Activated CD8-positive, alpha-beta T cell treated with anti-CD3 and anti-CD28 coated beads, Interleukin-2, amount 10 ng/mL, durations not matched to agents 7 days and 5 days (primary cell): ENCODE measurements at regions of chr1 and their contacts with region 1.

Region 1: GRCh38 chr1:221777431-221778072 is 35.7 kb upstream of the DUSP10 start:
- DNase-seq: peak; percentile 77
- ATAC-seq: peak; percentile 68
- H3K4me3 Mint-ChIP-seq: peak overlapping the region; percentile 61
- H3K27ac Mint-ChIP-seq: peak overlapping the region; percentile 93
- H3K4me1 Mint-ChIP-seq: peaks cover 85% of the 10 kb centered on the region
- H3K27me3 Mint-ChIP-seq: no peaks in the 10 kb centered on the region

Region 2: GRCh38 chr1:221366495-221367095 is 411.0 kb before region 1 on chr1:
- CTCF ChIA-PET with region 1: no interaction called
- POLR2A ChIA-PET with region 1: no interaction called
- DNase-seq: no peak
- ATAC-seq: no peak
- H3K4me3 Mint-ChIP-seq: no peak overlapping the region
- H3K27ac Mint-ChIP-seq: no peak overlapping the region
- H3K4me1 Mint-ChIP-seq: no peaks in the 10 kb centered on the region
- H3K27me3 Mint-ChIP-seq: peaks cover 5% of the 10 kb centered on the region

Region 3: DNA sequence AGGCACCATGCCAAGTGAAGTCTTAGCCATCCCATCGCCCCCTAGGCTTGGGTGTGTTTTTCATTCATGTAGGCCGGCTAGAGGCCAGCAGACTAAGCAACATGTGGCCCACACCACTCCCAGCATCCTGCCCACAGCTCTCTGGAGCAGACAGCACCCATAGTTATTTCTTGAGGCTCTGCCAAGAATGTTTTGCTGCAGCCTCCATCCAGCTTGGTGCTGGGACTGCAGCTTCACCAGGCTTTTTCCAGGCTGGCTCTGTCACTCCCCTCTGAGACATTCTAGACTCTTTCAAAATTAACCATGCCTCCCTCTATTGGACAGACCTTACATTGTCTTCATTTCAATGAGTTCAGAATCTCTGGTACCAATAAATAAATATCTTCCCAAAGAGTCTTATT is 139.9 kb before region 1 on chr1:
- CTCF ChIA-PET with region 1: no interaction called
- POLR2A ChIA-PET with region 1: no interaction called
- DNase-seq: no peak
- ATAC-seq: no peak
- H3K4me3 Mint-ChIP-seq: no peak overlapping the region
- H3K27ac Mint-ChIP-seq: no peak overlapping the region
- H3K4me1 Mint-ChIP-seq: no peaks in the 10 kb centered on the region
- H3K27me3 Mint-ChIP-seq: no peaks in the 10 kb centered on the region

Region 4: GRCh38 chr1:221708987-221709386 is 68.6 kb before region 1 on chr1:
- CTCF ChIA-PET with region 1: interaction called, 8 read pairs
- POLR2A ChIA-PET with region 1: interaction called, 10 read pairs
- DNase-seq: peak; percentile 60
- ATAC-seq: peak; percentile 27
- H3K4me3 Mint-ChIP-seq: no peak overlapping the region
- H3K27ac Mint-ChIP-seq: peak overlapping the region; percentile 78
- H3K4me1 Mint-ChIP-seq: peaks cover 76% of the 10 kb centered on the region
- H3K27me3 Mint-ChIP-seq: no peaks in the 10 kb centered on the region

Region 5: DNA sequence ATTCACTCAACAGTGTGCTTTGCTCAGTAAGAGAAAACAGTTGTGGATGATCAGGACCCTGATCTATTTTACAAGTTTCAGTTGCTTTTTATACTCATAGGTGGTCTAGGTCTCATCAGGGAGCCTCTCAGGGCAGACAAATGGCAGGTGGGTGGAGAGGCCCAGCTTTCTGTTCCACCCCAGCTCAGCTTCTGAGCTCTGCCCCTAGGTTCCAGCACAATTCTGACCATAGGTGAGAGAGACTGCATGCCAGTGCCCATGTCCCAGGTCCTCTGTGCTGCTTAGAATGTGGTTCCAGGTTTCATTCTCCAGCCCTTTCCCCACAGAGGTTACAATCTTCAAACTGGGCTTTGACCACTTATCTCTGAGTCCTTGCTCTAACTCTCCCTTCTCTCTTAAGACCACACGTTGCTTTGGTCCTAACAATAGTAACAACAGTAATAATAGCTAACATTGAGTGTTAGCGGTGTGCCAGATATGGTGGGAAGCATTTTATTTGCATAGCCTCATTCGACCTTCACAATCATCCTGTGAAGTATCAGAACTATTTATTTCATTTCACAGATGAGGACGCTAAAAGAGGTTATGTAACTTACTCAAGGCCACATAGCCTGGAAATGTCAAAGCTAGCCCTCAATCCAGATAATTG is 16.1 kb before region 1 on chr1:
- CTCF ChIA-PET with region 1: interaction called, 11 read pairs
- POLR2A ChIA-PET with region 1: interaction called, 3 read pairs
- DNase-seq: no peak
- ATAC-seq: no peak
- H3K4me3 Mint-ChIP-seq: no peak overlapping the region
- H3K27ac Mint-ChIP-seq: no peak overlapping the region
- H3K4me1 Mint-ChIP-seq: peaks cover 48% of the 10 kb centered on the region
- H3K27me3 Mint-ChIP-seq: no peaks in the 10 kb centered on the region

Region 6: DNA sequence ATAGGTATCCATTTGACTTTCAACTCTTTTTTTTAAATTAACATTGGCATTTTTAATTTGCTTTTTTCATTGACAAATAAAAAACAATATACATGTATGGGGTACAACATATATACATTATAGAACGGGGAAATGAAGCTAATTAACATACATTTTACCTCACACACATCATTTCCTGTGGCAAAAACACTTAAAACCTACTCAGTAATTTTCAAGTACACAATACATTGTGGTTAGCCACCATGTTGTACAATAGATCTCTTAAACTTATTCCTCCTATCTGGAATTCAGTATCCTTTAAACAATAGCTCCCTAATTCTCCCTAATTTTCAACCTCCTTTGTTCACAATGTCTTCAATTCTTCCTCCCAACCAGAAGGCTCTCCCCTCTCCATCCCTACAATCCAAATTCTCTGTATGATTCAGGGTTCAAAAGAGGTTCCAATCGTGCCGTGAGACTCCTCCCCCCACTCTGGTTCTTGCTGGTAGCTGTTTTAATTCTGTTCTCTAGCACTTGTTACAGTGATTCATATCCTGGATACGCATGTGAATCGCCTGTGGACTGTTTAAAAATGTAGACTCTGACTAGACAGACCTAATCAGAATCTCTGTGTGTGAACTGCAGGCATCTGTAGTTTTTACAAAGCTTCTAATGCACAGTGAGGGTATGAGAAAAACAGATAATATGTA is 51.9 kb after region 1 on chr1:
- CTCF ChIA-PET with region 1: interaction called, 25 read pairs
- POLR2A ChIA-PET with region 1: interaction called, 7 read pairs
- DNase-seq: peak; percentile 71
- ATAC-seq: peak; percentile 84
- H3K4me3 Mint-ChIP-seq: peak overlapping the region; percentile 58
- H3K27ac Mint-ChIP-seq: peak overlapping the region; percentile 92
- H3K4me1 Mint-ChIP-seq: peaks cover 87% of the 10 kb centered on the region
- H3K27me3 Mint-ChIP-seq: no peaks in the 10 kb centered on the region